ENCODE measurements at regions of chr10 and their contacts with region 1.

Region 1: DNA sequence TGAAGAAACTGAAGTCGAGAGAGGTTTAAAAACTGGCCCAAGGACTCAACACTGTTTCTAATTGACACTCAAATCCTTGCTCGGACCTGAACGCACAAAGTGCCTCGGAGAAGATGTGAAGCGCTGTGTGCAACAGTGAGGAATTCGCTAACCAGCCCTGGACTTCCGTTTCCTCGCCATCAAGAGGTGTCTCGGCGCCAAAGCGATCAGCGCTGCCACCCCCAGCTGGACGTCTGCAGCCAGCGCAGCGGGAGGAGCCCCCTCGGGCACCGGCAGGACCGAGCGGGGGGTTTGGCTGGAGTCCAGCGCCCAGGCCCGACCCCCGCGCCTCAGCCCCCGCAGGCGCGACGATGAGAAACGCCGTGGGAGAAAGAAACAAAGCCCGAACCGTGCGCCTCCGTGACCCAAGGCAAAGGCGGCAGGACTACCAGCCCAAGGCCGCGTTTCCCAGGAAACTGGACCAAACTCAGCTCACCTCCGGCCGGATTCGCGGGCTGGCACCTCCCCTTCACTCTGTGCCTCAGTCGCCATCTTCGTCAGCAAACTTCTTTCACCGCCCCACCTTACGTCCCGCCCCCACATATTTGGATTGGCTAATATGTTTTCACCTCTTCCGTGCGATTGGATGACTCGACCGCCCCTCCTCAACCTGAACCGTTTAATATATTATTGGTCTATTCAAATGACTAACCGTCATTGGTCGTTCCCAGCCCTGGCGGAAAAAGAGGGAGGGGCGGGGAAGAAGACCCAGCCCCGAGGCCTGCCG is at the start of gene ARHGAP19:
- DNase-seq: peak; percentile 93
- ATAC-seq: peak; percentile 98
- H3K4me3 Mint-ChIP-seq: peak within 1 kb of the TSS; percentile 83
- H3K27ac Mint-ChIP-seq: peak within 1 kb of the TSS; percentile 97
- H3K4me1 Mint-ChIP-seq: peaks cover 18% of the 10 kb centered on the region
- H3K27me3 Mint-ChIP-seq: no peaks in the 10 kb centered on the region
- CTCF ChIP-seq: no peak
- total RNA-seq, gene ARHGAP19: 35.5 to 42.2 TPM (median 38.0 TPM) in 3 replicates

Region 2: DNA sequence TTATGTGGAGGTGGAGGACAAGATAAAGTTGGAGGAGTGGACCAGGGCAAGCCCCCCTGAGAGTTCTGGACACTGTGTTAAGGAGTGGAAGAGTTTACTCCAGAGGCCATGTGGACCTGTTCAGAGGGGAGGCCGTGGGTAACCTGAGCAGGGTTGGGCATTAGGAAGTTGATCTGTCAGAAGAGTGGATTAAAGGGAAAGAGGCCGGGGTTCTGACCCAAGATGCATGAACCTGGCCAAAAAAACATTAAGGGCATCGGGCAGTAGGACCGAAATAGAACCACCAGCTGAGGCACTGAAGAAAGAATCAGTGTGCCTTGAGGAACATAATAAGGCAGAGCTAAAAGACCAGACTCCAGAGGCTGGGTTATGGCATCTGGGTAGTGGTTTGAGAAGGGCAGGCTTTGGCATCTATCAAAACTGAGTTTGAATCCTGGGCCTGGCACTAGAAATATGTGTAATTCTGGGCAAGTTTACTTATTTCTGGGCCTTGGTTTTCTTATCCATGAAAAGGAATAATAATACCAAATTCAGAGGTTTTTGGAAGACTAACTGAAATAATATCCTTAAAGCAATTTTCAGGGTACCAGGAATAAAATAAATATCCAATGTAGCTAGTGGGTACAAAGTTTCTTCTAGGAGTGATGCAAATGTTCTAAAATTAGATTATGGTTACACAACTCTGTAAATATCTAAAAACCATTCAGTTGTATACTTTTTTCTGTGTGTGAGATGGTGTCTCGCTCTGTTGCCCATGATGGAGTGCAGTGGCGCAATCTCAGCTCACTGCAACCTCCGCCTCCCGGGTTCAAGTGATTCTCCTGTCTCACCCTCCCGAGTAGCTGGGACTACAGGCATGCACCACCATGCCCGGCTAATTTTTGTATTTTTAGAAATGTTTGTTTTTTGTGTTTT is 15.8 kb after region 1 on chr10:
- CTCF ChIA-PET with region 1: no interaction called
- POLR2A ChIA-PET with region 1: interaction called, 10 read pairs
- DNase-seq: no peak
- ATAC-seq: no peak
- H3K4me3 Mint-ChIP-seq: no peak overlapping the region
- H3K27ac Mint-ChIP-seq: no peak overlapping the region
- H3K4me1 Mint-ChIP-seq: no peaks in the 10 kb centered on the region
- H3K27me3 Mint-ChIP-seq: no peaks in the 10 kb centered on the region; the same call in 1 of the 2 replicates
- CTCF ChIP-seq: no peak

Region 3: GRCh38 chr10:97318772-97319651 is 26.7 kb after region 1 on chr10 and contains the start of gene FRAT1:
- CTCF ChIA-PET with region 1: interaction called, 3 read pairs
- POLR2A ChIA-PET with region 1: interaction called, 14 read pairs
- DNase-seq: peak; percentile 92
- ATAC-seq: peak; percentile 50
- H3K4me3 Mint-ChIP-seq: peak within 1 kb of the TSS; percentile 83
- H3K27ac Mint-ChIP-seq: peak within 1 kb of the TSS; percentile 98
- H3K4me1 Mint-ChIP-seq: peaks cover 29% of the 10 kb centered on the region
- H3K27me3 Mint-ChIP-seq: peaks cover 33% of the 10 kb centered on the region
- CTCF ChIP-seq: no peak
- total RNA-seq, gene FRAT1: 7.0 to 8.2 TPM (median 7.6 TPM) in 3 replicates

Region 4: GRCh38 chr10:97334370-97335175 is 42.3 kb after region 1 on chr10 and contains the start of gene FRAT2:
- CTCF ChIA-PET with region 1: interaction called, 3 read pairs
- POLR2A ChIA-PET with region 1: interaction called, 11 read pairs
- DNase-seq: peak; percentile 93
- ATAC-seq: peak; percentile 17
- H3K4me3 Mint-ChIP-seq: peak within 1 kb of the TSS; percentile 86
- H3K27ac Mint-ChIP-seq: peak within 1 kb of the TSS; percentile 97
- H3K4me1 Mint-ChIP-seq: peaks cover 62% of the 10 kb centered on the region
- H3K27me3 Mint-ChIP-seq: no peaks in the 10 kb centered on the region
- CTCF ChIP-seq: no peak
- total RNA-seq, gene FRAT2: 48.2 to 53.5 TPM (median 50.8 TPM) in 3 replicates

Region 5: GRCh38 chr10:97659589-97659988 is 367.3 kb after region 1 on chr10:
- CTCF ChIA-PET with region 1: no interaction called
- POLR2A ChIA-PET with region 1: no interaction called
- DNase-seq: no peak
- ATAC-seq: no peak
- H3K4me3 Mint-ChIP-seq: no peak overlapping the region
- H3K27ac Mint-ChIP-seq: no peak overlapping the region; the same call in 1 of the 2 replicates
- H3K4me1 Mint-ChIP-seq: no peaks in the 10 kb centered on the region
- H3K27me3 Mint-ChIP-seq: no peaks in the 10 kb centered on the region
- CTCF ChIP-seq: no peak